Vagina (tissue), 2 donors: ENCODE measurements at regions of chr19 and their contacts with region 1.

Region 1: DNA sequence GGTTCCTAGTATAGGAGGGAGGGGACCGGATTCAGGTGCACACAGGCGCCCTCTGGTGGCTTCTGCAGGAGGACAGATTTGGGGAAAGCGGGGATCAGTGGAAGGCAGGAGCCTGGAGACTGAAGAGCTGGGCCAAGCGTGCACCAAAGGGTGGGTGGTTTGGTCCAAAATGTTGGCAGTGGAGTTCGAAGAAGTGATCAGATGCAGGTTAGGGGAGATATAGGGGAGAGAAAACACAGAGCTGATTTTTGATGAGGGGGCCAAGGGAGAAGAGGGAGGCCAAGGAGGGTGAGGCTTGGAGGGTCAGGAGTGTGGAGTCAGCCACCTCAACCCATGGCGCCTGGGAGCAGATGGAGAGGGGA is 6.8 kb upstream of the CARM1 start:
- DNase-seq: no peak
- H3K4me3 ChIP-seq: no peak overlapping the region
- H3K27ac ChIP-seq: peak overlapping the region; percentile 72
- H3K4me1 ChIP-seq: peaks cover 9% of the 10 kb centered on the region
- H3K27me3 ChIP-seq: no peaks in the 10 kb centered on the region
- CTCF ChIP-seq: peak; percentile 75 to 87 (median 84)
- POLR2A ChIP-seq: no peak

Region 2: DNA sequence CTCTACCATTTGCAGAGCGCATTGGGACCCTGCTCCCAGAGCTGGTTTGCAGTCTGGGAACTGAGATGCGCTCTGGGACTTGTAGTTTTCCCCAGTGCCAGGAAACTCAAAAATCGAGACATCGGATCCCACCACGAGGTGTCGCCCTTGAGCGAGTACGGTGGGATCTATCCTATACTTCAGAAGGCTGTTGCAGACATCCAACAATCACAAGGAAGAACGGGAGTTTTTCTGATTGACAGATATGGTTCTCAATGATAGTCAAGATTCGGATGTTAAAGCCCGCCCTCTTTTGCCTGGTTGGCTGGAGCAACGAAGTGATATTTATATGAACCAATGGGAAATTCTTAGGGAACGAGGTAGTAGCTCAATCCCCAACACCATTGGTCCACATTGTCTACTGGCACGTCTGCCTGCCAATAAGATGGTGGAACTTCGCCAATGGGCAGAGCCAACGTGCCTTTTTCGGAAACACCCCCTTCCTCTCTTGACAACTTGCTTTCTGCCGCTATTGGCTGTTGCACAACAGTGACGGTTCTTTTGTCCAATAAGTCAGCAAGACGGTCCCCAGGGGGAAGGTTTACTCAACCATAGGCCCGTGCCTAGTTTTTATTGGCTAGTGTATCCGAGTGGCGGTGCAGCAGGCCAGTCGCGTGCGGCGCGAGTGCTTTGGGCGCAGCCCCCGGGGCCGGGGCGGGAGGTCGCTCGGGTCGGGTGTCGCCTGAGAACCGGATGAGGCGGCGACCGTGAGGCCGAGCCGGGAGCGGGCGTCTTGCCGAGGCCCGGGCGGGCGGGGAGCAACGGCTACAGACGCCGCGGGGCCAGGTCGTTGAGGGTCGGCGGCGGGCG is 146.9 kb before region 1 on chr19 and contains the start of gene DNM2:
- intact Hi-C with region 1: loop called (anchors 5 kb)
- DNase-seq: peak; percentile 99 to 100
- H3K4me3 ChIP-seq: peak within 1 kb of the TSS; percentile 76 to 93
- H3K27ac ChIP-seq: peak within 1 kb of the TSS; percentile 87
- H3K4me1 ChIP-seq: peaks cover 42% of the 10 kb centered on the region
- H3K27me3 ChIP-seq: no peaks in the 10 kb centered on the region
- CTCF ChIP-seq: peak; percentile 66 to 86 (median 83)
- POLR2A ChIP-seq: peak; percentile 24 to 76
- total RNA-seq, gene DNM2: 128 TPM

Region 3: DNA sequence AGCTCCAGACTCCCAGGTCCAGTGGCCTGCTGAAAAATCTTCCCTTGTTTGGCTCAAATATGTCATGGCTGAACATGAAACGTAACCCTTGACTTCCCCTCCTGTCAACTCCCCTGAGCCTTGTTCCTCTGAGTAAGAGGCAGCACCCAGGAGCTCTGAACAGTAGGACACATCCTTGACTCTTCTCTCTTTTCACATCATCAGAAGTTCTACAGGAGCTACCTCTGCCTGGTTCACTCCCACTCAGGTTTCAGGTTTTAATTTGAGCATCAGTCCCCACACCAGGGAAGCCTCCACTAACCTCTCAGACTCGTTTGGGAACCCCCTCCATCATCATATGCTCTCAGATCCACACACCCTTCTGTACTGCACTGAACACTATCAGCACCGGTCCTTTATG is 843.9 kb after region 1 on chr19:
- intact Hi-C with region 1: no loop called
- DNase-seq: no peak
- H3K4me3 ChIP-seq: no peak overlapping the region
- H3K27ac ChIP-seq: no peak overlapping the region
- H3K4me1 ChIP-seq: no peaks in the 10 kb centered on the region
- H3K27me3 ChIP-seq: no peaks in the 10 kb centered on the region
- CTCF ChIP-seq: no peak
- POLR2A ChIP-seq: no peak